ENCODE measurements at regions of chr16 and their contacts with region 1.

Region 1: GRCh38 chr16:81006814-81007696 is at the starts of genes CENPN and CMC2:
- DNase-seq: peak; percentile 100
- H3K4me3 ChIP-seq: peak within 1 kb of the TSS; percentile 67 to 95
- H3K27ac ChIP-seq: peak within 1 kb of the TSS; percentile 94 to 98
- H3K4me1 ChIP-seq: peaks cover 0 to 21% (median 17%) of the 10 kb centered on the region in 4 donors
- H3K27me3 ChIP-seq: no peaks in the 10 kb centered on the region
- CTCF ChIP-seq: peak in 1 of 2 experiments; percentile 4

Region 2: GRCh38 chr16:80971819-80972218 is 35.2 kb before region 1 on chr16:
- intact Hi-C with region 1: no loop called
- DNase-seq: no peak
- H3K4me3 ChIP-seq: no peak overlapping the region
- H3K27ac ChIP-seq: no peak overlapping the region
- H3K4me1 ChIP-seq: no peaks in the 10 kb centered on the region
- H3K27me3 ChIP-seq: no peaks in the 10 kb centered on the region
- CTCF ChIP-seq: no peak

Region 3: DNA sequence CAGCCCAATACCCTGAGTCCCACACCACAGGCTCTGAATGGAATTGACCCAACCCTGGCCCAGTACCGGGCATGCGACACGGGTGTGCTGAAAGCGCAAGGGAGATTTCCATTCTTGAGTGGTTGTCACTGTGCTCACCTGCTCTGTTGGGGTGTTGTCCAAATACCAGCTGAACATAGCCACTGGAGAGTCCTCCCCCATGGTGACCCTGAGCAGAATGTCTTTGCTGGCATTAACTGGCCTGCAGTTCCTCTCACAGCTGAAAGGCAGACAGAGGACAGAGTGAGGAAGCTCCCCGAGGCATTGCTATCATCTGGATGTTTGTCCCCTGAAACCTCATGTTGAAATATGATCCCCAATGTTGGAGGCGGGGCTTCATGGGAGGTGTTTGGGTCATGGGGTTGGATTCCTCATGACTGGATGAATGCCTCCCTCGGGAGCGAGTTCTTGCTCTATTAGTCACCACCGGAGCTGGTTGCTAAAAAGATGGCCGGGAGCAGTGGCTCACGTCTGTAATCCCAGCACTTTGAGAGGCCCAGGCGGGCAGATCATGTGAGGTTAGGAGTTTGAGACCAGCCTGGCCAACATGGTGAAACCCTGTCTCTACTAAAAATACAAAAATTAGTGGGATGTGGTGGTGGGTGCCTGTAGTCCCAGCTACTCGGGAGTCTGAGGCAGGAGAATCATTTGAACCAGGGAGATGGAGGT is 174.1 kb after region 1 on chr16:
- intact Hi-C with region 1: loop called (anchors 5 kb)
- DNase-seq: peak; percentile 94 to 95
- H3K4me3 ChIP-seq: peak overlapping the region; percentile 19 to 32
- H3K27ac ChIP-seq: peak overlapping the region; percentile 78 to 84
- H3K4me1 ChIP-seq: peaks cover 0 to 25% (median 9%) of the 10 kb centered on the region in 4 donors
- H3K27me3 ChIP-seq: no peaks in the 10 kb centered on the region
- CTCF ChIP-seq: no peak